ENCODE measurements at regions of chr7 and their contacts with region 1.

Region 1: DNA sequence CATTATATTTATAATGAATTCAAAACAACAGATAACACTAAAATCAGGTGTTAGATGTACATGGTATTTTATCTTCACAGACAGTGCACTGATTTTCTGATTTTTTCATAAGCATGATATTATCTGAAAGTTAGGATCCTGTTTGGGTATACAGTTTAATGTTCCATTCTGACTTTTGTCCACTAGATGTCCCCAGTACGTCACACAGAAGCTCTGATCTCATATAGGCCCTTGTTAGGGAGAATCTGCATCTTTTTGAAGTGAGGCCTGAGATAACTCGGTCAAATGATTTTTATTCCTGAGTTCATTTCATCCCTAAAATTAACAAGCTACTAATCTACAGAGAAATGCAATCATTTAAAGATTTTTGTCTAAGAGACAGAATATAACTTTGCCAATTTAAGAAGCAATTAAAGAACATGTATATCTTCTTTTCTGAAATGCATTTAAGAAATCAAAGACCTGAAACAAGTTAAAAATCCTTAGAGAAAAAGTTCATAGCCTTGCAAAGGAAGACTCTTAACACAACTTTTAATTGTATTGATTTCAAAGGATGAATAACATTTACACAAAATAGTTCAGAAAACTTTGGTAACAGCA is 72.0 kb upstream of the TES start:
- DNase-seq: no peak
- ATAC-seq: peak; percentile 91
- H3K4me3 Mint-ChIP-seq: no peak overlapping the region
- H3K27ac Mint-ChIP-seq: no peak overlapping the region
- H3K4me1 Mint-ChIP-seq: peaks cover 33% of the 10 kb centered on the region
- H3K27me3 Mint-ChIP-seq: no peaks in the 10 kb centered on the region
- CTCF ChIP-seq: peak; percentile 48

Region 2: GRCh38 chr7:115763347-115763746 is 375.0 kb before region 1 on chr7:
- CTCF ChIA-PET with region 1: no interaction called
- POLR2A ChIA-PET with region 1: no interaction called
- intact Hi-C with region 1: no loop called
- DNase-seq: no peak
- ATAC-seq: no peak
- H3K4me3 Mint-ChIP-seq: no peak overlapping the region
- H3K27ac Mint-ChIP-seq: no peak overlapping the region
- H3K4me1 Mint-ChIP-seq: no peaks in the 10 kb centered on the region
- H3K27me3 Mint-ChIP-seq: no peaks in the 10 kb centered on the region
- CTCF ChIP-seq: no peak

Region 3: DNA sequence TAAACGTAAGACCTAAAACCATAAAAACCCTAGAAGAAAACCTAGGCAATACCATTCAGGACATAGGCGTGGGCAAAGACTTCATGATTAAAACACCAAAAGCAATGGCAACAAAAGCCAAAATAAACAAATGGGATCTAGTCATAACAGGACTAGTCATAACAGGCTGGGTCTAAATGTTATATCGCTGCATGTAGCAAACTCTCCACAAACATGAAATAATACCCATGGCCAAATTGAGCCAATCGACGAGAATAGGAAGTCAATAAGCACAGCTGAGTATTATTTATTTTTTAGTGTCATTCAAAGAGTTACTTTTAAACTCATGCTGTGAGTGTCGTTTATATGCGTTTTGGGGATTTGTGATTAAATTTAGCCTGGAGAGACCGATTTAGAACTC is 332.8 kb before region 1 on chr7:
- CTCF ChIA-PET with region 1: no interaction called
- POLR2A ChIA-PET with region 1: no interaction called
- intact Hi-C with region 1: no loop called
- DNase-seq: no peak
- ATAC-seq: no peak
- H3K4me3 Mint-ChIP-seq: no peak overlapping the region
- H3K27ac Mint-ChIP-seq: no peak overlapping the region
- H3K4me1 Mint-ChIP-seq: no peaks in the 10 kb centered on the region
- H3K27me3 Mint-ChIP-seq: peaks cover 2% of the 10 kb centered on the region
- CTCF ChIP-seq: no peak

Region 4: DNA sequence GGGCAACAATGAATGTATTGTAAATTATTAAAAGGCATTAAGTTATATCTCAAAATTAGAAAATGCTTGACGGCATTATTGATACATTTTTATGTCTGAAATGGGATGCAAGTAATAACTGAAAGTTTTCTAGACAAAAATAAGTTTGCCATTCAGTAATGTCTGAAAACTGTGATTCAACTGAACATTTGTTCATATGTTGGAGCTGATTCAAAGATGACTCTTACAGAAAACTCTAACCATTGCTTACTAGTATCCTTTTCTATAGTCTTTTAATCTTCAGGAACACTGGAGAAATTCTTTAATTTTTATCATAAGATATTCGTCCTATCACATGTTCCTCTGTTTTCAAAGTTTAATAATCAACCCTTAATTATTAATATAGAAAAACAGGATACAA is 36.6 kb before region 1 on chr7:
- CTCF ChIA-PET with region 1: no interaction called
- POLR2A ChIA-PET with region 1: no interaction called
- intact Hi-C with region 1: no loop called
- DNase-seq: no peak
- ATAC-seq: no peak
- H3K4me3 Mint-ChIP-seq: no peak overlapping the region
- H3K27ac Mint-ChIP-seq: no peak overlapping the region
- H3K4me1 Mint-ChIP-seq: no peaks in the 10 kb centered on the region
- H3K27me3 Mint-ChIP-seq: no peaks in the 10 kb centered on the region
- CTCF ChIP-seq: no peak

Region 5: DNA sequence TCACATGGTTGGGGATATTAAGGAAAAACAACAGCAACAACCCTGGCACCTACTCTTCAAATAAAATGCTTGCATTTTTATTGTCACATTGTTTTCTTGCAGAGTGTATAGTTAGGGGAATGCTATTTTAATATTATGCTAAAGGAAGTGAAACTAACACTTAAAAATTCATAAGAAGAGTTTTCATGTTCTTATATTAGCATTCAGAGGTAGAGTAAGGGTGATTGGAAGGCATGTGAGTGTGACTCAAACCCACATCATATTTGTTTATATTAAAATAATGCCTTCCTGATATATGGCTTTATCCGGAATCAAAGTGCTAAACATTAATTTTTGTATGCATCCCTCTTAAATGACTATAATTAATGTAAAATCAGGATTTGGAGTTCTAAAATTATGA is 12.3 kb after region 1 on chr7:
- CTCF ChIA-PET with region 1: interaction called, 3 read pairs
- POLR2A ChIA-PET with region 1: no interaction called
- intact Hi-C with region 1: loop called (anchors 1 kb)
- DNase-seq: no peak
- ATAC-seq: peak; percentile 76
- H3K4me3 Mint-ChIP-seq: peak overlapping the region; percentile 74
- H3K27ac Mint-ChIP-seq: peak overlapping the region; percentile 73
- H3K4me1 Mint-ChIP-seq: peaks cover 72% of the 10 kb centered on the region
- H3K27me3 Mint-ChIP-seq: no peaks in the 10 kb centered on the region
- CTCF ChIP-seq: no peak

Region 6: GRCh38 chr7:116159711-116160110 is 21.4 kb after region 1 on chr7:
- CTCF ChIA-PET with region 1: interaction called, 11 read pairs
- POLR2A ChIA-PET with region 1: interaction called, 5 read pairs
- intact Hi-C with region 1: loop called (anchors 2 kb)
- DNase-seq: no peak
- ATAC-seq: peak; percentile 70
- H3K4me3 Mint-ChIP-seq: peak overlapping the region; percentile 66
- H3K27ac Mint-ChIP-seq: peak overlapping the region; percentile 50
- H3K4me1 Mint-ChIP-seq: peaks cover 65% of the 10 kb centered on the region
- H3K27me3 Mint-ChIP-seq: no peaks in the 10 kb centered on the region
- CTCF ChIP-seq: no peak

Region 7: DNA sequence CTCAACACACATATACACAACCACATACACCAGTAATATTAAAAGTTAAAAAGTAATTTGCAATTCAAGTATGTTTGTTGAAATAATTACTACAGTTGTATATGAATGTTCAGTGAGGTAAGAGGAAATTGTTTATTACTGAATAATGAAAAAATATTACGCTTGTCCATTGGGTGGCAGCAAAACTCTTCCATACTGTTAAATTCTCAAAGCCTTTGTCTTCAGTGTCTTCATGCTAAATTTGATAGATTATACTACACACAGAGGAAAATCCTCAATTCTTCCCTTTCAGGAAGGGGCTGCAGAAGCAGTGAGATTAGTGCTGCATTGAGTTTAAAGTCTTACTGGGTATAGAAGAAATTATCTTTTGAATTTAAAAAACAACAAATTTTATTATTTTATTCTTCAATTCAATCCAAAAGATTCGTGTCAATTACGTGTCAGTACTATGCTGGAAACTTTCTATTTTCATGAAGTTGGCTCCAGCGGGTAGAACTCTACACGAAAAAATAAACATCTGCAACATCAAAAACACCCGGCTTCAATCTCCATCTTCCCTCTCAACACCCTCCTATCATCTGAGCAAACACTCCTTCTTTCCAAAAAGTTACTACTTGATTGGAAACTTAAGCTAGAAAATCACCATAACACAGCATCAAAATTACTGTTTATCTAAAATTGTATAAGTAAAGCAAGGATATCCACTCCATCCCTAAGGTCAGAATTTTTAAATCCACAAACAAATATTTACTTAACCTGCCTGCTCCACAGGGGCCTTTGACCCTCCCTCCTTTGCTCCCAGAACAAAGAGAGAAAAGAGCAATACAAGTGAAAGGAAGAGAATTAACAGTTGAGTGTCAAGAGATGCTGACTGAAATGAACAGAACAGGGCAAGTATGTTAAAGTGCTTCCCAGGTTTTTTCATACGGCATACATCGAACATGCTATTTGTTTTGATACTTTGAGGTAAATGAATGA is 35.0 kb after region 1 on chr7:
- CTCF ChIA-PET with region 1: interaction called, 23 read pairs
- POLR2A ChIA-PET with region 1: no interaction called
- intact Hi-C with region 1: loop called (anchors 1 kb)
- DNase-seq: no peak
- ATAC-seq: peak; percentile 49
- H3K4me3 Mint-ChIP-seq: no peak overlapping the region
- H3K27ac Mint-ChIP-seq: no peak overlapping the region
- H3K4me1 Mint-ChIP-seq: peaks cover 12% of the 10 kb centered on the region
- H3K27me3 Mint-ChIP-seq: no peaks in the 10 kb centered on the region
- CTCF ChIP-seq: no peak

Region 8: DNA sequence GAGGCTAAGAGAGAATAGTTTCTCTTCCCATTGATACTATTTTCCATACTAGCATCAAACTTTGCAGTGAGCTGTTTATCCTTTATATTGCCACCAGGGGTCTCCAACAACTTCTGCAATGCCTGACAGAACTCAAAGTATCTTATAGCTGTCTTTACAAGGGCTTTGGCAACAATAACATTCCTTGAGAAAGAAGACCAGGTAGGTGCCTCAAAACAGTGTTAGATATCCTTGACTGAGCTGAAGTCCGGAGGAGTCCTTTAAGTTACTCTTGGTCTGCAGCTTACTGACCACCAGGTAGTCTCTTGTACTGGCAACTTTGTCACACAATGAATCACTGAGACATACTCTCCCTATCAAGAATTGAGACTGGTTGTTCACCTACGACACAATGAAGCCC is 42.0 kb after region 1 on chr7:
- CTCF ChIA-PET with region 1: interaction called, 24 read pairs
- POLR2A ChIA-PET with region 1: no interaction called
- intact Hi-C with region 1: loop called (anchors 1 kb)
- DNase-seq: no peak
- ATAC-seq: peak; percentile 81
- H3K4me3 Mint-ChIP-seq: no peak overlapping the region
- H3K27ac Mint-ChIP-seq: no peak overlapping the region
- H3K4me1 Mint-ChIP-seq: no peaks in the 10 kb centered on the region
- H3K27me3 Mint-ChIP-seq: peaks cover 2% of the 10 kb centered on the region
- CTCF ChIP-seq: no peak

Region 9: DNA sequence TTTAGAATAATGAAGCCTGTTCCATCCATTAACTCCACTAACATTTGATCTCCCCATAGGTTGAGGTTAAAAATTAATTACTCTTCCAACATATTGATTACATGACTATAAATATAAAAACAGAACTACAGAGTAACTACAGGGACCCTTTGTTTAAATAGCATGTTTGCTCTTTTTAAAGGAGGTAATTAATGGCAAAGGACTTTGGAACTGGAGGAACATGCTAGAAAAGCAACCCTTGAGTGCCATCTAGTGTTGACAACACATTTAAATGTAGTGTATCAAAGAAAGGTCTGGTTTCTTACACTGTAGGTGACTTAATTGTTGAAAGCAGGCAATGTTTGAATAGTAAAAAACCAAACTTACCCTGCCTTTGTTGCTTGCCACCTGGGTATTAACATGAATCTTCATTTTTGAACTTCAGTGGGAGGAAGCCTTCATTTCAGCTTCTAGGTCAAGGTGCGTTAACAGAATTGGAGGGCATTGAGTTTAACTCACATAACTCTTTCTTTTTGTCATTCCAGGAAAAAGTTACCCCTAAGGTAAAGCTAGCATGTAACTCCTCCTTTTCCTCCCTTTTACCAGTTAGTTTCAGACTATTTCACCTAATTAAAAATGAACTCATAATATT is 671.4 kb after region 1 on chr7:
- CTCF ChIA-PET with region 1: no interaction called
- POLR2A ChIA-PET with region 1: no interaction called
- intact Hi-C with region 1: loop called (anchors 1 kb)
- DNase-seq: no peak
- ATAC-seq: peak; percentile 50
- H3K4me3 Mint-ChIP-seq: no peak overlapping the region
- H3K27ac Mint-ChIP-seq: no peak overlapping the region
- H3K4me1 Mint-ChIP-seq: no peaks in the 10 kb centered on the region
- H3K27me3 Mint-ChIP-seq: peaks cover 9% of the 10 kb centered on the region
- CTCF ChIP-seq: peak; percentile 53

Measured in activated B cell treated with CpG ODN at 0.5 μM for 24 hours (primary cell).